Caco-2 (cell line): ENCODE measurements at regions of chr11 and their contacts with region 1.

Region 1: GRCh38 chr11:27158722-27159679 is 118.4 kb downstream of the BBOX1 start:
- DNase-seq: peak; percentile 59 to 63
- H3K4me3 ChIP-seq: no peak overlapping the region
- H3K4me3 Mint-ChIP-seq: no peak overlapping the region
- H3K27ac Mint-ChIP-seq: no peak overlapping the region
- H3K4me1 ChIP-seq: peaks cover 4% of the 10 kb centered on the region; the same call in 1 of the 2 replicates
- H3K4me1 Mint-ChIP-seq: no peaks in the 10 kb centered on the region
- H3K27me3 ChIP-seq: no peaks in the 10 kb centered on the region
- H3K27me3 Mint-ChIP-seq: peaks cover 2% of the 10 kb centered on the region
- CTCF ChIP-seq: peak; percentile 68 to 76

Region 2: GRCh38 chr11:26286472-26287066 is 872.4 kb before region 1 on chr11:
- CTCF ChIA-PET with region 1: no interaction called
- POLR2A ChIA-PET with region 1: no interaction called
- intact Hi-C with region 1: loop called (anchors 5 kb)
- DNase-seq: peak in 1 of 2 experiments; percentile 21
- H3K4me3 ChIP-seq: no peak overlapping the region
- H3K4me3 Mint-ChIP-seq: no peak overlapping the region
- H3K27ac Mint-ChIP-seq: no peak overlapping the region
- H3K4me1 ChIP-seq: no peaks in the 10 kb centered on the region
- H3K4me1 Mint-ChIP-seq: no peaks in the 10 kb centered on the region
- H3K27me3 ChIP-seq: no peaks in the 10 kb centered on the region
- H3K27me3 Mint-ChIP-seq: peaks cover 6% of the 10 kb centered on the region
- CTCF ChIP-seq: peak; percentile 41 to 53

Region 3: GRCh38 chr11:27040302-27041115 is 118.5 kb before region 1 on chr11 and contains the start of gene BBOX1:
- CTCF ChIA-PET with region 1: no interaction called
- POLR2A ChIA-PET with region 1: no interaction called
- intact Hi-C with region 1: loop called (anchors 2 kb)
- DNase-seq: no peak
- H3K4me3 ChIP-seq: no peak within 1 kb of the TSS
- H3K4me3 Mint-ChIP-seq: no peak within 1 kb of the TSS
- H3K27ac Mint-ChIP-seq: no peak within 1 kb of the TSS
- H3K4me1 ChIP-seq: no peaks in the 10 kb centered on the region
- H3K4me1 Mint-ChIP-seq: no peaks in the 10 kb centered on the region
- H3K27me3 ChIP-seq: no peaks in the 10 kb centered on the region
- H3K27me3 Mint-ChIP-seq: no peaks in the 10 kb centered on the region
- CTCF ChIP-seq: no peak
- total RNA-seq, gene BBOX1: not detected in 2 replicates